BJ (cell line): ENCODE measurements at regions of chr1 and their contacts with region 1.

Region 1: DNA sequence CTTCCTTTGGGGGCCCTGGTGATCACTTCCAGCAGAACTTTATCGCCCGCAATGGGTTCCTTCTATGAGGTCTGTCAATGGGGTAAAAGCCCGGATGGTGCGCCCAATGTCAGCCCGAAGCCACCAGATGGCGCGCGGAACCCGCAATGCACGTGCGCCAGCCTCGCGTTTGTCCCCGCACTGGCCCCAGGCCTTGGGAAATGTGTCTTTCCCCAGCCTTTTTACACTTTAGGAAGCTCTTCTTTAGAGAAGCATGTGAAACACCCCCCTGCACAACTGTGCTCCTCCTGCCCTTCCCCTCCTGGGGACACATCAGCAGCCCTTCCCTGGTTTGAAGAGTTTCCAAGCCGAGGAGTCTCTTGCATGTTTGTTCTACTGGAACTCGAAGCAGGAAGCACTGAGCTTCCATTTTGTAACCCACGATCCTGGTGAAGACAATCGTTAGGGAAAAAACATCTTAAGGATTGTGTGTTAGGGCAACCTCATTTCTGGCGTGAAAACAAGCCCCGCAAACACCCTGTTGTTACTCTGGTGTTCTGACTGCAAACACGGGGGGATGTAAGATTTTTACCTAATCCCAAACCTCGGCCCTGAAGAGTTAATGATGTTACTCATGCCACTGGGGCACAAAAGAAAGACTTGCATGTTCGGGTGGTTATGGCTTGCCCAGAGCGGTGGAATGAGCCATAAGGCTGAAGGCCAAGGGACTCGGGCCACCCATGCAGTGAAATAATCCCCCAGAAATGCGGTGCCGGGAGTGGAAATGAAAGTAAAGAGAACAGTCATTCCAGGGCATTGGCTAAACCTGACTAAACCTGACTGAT is 20.4 kb upstream of the TARBP1 start:
- DNase-seq: no peak
- H3K4me3 ChIP-seq: no peak overlapping the region
- H3K27me3 ChIP-seq: no peaks in the 10 kb centered on the region
- CTCF ChIP-seq: peak; percentile 96

Region 2: GRCh38 chr1:234373959-234374254 is 125.4 kb before region 1 on chr1:
- CTCF ChIA-PET with region 1: no interaction called
- POLR2A ChIA-PET with region 1: no interaction called
- DNase-seq: no peak
- H3K4me3 ChIP-seq: peak overlapping the region; percentile 81
- H3K27me3 ChIP-seq: no peaks in the 10 kb centered on the region
- CTCF ChIP-seq: no peak

Region 3: DNA sequence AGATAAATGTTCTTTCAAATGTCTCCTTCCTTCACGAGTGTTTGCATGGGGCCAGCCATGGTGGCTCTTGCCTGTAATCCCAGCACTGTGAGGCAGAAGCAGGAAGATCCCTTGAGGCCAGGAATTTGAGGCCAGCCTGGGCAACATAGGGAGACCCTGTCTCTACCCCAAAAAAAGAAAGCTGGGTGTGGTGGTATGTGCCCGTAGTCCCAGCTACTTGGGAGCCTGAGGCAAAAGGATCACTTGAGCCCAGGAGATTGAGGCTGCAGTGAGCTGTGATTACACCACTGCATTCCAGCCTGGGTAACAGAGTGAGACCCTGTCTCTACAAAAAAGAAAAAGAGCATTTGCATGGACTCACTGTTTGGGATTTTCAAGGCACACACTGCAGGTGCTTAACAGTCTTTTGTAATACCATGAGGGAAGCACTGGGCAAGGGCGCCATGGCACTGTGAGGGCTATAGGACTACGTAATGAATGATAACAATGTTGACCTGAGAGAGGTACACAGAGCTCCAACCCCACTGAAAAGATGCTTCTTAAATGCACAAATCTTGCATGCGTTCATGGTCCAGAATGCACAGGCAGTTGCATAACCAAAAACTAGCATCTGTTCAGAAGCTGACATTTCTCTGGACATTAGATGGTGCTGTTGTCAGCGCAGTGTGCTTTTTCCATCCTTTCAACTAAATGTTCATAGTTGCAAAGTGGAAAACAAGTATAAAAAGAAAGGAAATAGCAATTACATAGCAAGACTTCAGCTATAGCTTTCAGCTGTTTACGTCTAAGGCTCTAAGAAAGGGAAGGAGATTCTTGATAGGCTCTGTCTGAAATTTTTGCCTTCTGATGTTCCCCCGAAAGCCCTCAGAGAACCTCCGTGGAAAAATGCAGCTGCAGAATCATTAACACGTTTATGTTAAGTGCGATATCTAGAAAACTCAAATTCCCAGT is 12.6 kb before region 1 on chr1:
- CTCF ChIA-PET with region 1: interaction called, 14 read pairs
- POLR2A ChIA-PET with region 1: interaction called, 3 read pairs
- DNase-seq: peak; percentile 49
- H3K4me3 ChIP-seq: no peak overlapping the region
- H3K27me3 ChIP-seq: 0 out of 2 replicates have a peak, but pooled peaks cover 1% of the 10 kb centered on the region
- CTCF ChIP-seq: peak; percentile 71

Region 4: GRCh38 chr1:234599617-234600417 is 100.5 kb after region 1 on chr1:
- CTCF ChIA-PET with region 1: interaction called, 21 read pairs
- POLR2A ChIA-PET with region 1: no interaction called
- DNase-seq: no peak
- H3K4me3 ChIP-seq: peak overlapping the region; percentile 51
- H3K27me3 ChIP-seq: no peaks in the 10 kb centered on the region
- CTCF ChIP-seq: 0 out of 2 replicates have a peak, but pooled peaks have one; percentile 9

Region 5: DNA sequence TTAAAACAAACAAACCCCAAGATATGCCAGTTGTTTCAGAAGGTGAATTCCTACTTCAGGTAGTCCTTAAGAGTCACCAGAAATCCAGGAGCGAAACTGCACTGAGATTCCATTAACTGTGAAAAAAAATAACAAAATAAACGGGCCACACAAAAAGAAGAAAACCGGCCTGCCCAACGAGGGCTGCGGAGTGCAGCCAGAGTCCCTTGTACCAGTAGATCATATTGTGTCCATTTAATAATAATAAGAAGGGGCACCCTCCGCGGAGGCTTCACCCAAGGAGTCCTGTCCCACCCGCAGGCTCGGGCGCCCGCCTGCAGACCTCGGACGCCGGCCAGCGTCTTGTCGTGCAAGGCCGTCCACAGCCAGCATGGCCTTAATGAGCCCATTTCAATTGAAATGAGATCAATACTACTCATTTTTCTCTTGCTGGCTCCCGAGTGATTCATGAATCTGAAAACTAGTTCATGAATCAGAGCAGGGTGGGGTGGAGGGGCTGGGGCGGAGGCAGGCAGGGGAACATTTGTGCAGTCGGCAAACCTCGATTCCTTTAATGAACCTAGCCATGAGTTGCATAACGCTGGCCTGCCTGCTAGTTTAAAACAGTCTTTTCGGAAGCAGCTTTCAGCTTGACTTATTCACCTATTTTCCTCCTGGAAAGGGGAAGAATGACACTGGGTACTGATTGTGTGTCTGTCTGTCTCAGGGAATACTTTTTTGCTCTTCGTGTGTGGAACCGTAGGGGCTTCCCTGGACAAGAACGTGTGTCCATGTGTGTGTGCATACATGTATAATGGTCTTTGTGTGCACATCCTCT is 223.8 kb after region 1 on chr1:
- CTCF ChIA-PET with region 1: interaction called, 11 read pairs
- POLR2A ChIA-PET with region 1: no interaction called
- DNase-seq: peak; percentile 74
- H3K4me3 ChIP-seq: no peak overlapping the region
- H3K27me3 ChIP-seq: no peaks in the 10 kb centered on the region
- CTCF ChIP-seq: no peak

Region 6: GRCh38 chr1:235077571-235078479 is 578.5 kb after region 1 on chr1:
- CTCF ChIA-PET with region 1: interaction called, 29 read pairs
- POLR2A ChIA-PET with region 1: interaction called, 3 read pairs
- DNase-seq: no peak
- H3K4me3 ChIP-seq: no peak overlapping the region
- H3K27me3 ChIP-seq: no peaks in the 10 kb centered on the region
- CTCF ChIP-seq: no peak